Tibial artery (tissue), 4 donors: ENCODE measurements at regions of chr9 and their contacts with region 1.

Region 1: DNA sequence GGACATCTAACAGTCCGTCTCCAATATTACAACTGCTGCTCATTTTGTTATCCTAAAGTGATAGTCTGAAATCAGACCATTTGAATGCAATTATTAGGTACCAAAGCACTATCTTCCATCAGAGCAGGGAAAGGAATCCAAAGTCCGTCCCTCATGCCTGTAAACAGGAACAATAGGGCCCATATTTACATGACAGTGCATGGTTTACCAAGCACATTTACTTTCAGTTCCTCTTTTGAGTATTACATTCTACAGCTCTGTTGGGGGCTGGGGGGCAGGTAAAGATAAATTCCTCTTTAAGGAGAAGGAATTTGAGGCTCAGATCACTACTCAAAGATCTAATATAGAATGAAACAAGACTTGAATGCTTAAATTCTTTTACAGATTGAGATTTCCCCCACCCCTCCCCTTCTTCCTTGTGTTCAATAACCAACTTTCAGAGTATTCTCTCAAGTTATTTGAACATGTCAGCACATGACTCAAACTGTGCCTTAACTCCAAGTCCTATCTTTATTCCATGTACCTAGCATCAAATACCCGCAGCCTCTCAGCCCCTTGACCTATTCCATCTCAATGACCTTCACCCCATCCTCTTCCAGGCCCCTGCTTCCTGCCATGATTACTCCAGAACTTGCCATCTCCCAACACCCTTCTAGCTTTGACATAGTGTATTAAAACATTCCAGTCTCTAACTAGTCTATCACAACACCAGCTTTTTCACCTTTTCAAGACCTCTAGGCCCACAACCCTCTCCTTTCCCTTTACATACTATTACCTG is 71.0 kb downstream of the BRINP1 start:
- DNase-seq: no peak
- H3K4me3 ChIP-seq: no peak overlapping the region
- H3K27ac ChIP-seq: no peak overlapping the region
- H3K4me1 ChIP-seq: no peaks in the 10 kb centered on the region
- H3K27me3 ChIP-seq: no peaks in the 10 kb centered on the region
- CTCF ChIP-seq: no peak

Region 2: DNA sequence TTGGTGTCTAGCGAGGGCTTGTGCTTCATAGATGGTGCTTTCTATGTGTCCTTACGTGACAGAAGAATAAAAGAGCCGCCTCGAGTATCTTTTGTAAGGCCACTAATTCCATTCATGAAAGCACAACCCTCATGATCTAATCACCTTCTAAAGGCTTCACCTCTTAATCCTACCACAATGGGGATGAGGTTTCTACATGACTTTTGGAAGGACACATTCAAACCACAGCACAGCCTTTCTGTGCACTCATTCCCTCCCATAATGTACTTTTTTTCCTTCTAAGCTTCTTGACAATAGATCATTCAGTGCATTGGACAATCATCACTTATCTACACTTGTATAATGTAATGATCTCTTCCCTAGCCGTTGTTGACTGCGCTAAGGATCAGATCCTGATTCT is 703.8 kb before region 1 on chr9:
- intact Hi-C with region 1: loop called (anchors 5 kb)
- DNase-seq: no peak
- H3K4me3 ChIP-seq: no peak overlapping the region
- H3K27ac ChIP-seq: no peak overlapping the region
- H3K4me1 ChIP-seq: no peaks in the 10 kb centered on the region
- H3K27me3 ChIP-seq: no peaks in the 10 kb centered on the region
- CTCF ChIP-seq: no peak

Region 3: DNA sequence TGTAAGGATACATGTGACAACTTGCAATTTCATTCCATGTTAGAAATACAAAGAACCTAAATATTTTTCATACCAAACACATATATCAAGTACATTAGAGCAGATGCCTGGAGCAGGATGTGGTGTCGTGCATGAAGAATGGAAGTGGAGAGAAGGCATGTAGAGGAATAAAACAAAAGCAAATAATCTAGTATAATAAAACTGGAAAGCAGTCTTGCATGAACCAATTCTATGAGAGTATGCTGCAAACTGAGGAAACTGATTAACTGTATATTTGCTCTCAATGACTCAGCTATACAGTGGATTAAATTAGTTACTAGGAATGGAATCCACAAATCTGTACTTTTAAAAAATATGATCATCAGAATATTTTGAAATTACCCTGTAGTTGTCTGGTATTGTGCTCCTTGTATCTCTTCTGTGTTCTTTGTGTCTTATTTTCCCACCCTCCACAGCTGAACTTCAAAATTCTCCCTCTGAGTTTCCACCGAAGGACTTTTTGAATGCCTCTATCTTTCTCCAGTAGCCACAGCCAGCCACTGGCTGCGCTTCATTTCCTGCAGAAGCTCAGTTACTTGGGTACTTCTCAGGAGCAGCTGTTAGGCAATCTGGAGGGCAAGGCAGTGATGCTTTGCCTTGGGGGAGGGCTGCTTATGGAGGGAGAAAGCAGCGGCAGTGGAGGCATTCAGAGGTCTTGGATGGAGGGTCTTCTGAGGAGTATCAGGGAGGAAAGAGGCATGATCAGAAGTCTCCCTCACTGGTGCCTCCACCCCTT is 537.1 kb before region 1 on chr9:
- intact Hi-C with region 1: no loop called
- DNase-seq: no peak
- H3K4me3 ChIP-seq: no peak overlapping the region
- H3K27ac ChIP-seq: no peak overlapping the region
- H3K4me1 ChIP-seq: no peaks in the 10 kb centered on the region
- H3K27me3 ChIP-seq: no peaks in the 10 kb centered on the region
- CTCF ChIP-seq: no peak

Region 4: DNA sequence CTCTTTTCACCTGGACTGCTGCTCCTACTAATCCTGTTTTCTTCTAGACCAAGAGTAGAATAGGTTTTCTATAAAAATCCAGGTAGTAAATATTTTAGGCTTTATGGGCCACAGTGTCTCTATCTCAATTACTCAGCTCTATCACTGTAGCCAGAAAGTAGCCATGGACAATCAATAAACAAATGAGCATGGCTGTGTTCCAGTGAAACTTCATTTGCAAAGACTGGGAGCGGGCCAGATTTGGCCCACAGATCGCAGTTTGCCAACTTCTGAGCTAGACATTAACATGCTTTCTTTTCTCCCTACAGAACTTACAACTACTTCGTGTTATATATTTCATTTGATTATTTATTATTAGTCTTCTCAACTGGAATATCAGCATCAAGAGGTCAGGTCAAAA is 40.8 kb after region 1 on chr9:
- intact Hi-C with region 1: no loop called
- DNase-seq: no peak
- H3K4me3 ChIP-seq: no peak overlapping the region
- H3K27ac ChIP-seq: no peak overlapping the region
- H3K4me1 ChIP-seq: peaks cover 0 to 11% (median 5%) of the 10 kb centered on the region in 4 donors
- H3K27me3 ChIP-seq: no peaks in the 10 kb centered on the region
- CTCF ChIP-seq: no peak